H1 (cell line): ENCODE measurements at regions of chrX and their contacts with region 1.

Region 1: GRCh38 chrX:150680978-150681377 is 12.2 kb upstream of the MTMR1 start:
- DNase-seq: no peak
- H3K4me3 ChIP-seq: no peak overlapping the region
- H3K27ac ChIP-seq: no peak overlapping the region
- H3K4me1 ChIP-seq: no peaks in the 10 kb centered on the region; a peak in 1 of 7 replicates
- H3K27me3 ChIP-seq: no peaks in the 10 kb centered on the region
- CTCF ChIP-seq: peak; percentile 30 to 62 (median 60)
- EP300 ChIP-seq: no peak
- POLR2A ChIP-seq: no peak
- RAD21 ChIP-seq: peak; percentile 78 to 83

Region 2: DNA sequence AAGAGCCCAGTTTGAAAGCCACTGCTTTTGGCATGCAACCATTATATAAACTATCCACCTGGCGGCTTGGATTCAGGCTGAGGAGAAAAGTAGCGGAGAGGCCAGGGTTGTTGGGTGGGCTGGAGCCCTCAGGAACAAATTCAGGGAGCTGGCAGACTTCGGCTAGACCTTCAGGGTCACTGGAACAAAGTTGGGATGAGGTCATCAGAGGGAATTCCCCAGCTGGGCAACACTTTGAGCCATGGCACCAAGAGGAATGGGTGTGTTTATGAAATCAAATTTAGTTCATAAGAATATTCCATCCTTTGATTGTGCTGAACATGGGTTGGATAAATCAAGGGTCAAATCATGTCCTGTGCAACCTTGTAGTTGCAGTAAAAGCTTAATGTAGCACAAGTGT is 34.2 kb after region 1 on chrX:
- CTCF ChIA-PET with region 1: interaction called, 10 read pairs
- POLR2A ChIA-PET with region 1: no interaction called
- DNase-seq: no peak
- H3K4me3 ChIP-seq: no peak overlapping the region
- H3K27ac ChIP-seq: no peak overlapping the region
- H3K4me1 ChIP-seq: no peaks in the 10 kb centered on the region
- H3K27me3 ChIP-seq: no peaks in the 10 kb centered on the region
- CTCF ChIP-seq: no peak
- EP300 ChIP-seq: no peak
- POLR2A ChIP-seq: no peak
- RAD21 ChIP-seq: no peak